CD4-positive, alpha-beta T cell (primary cell): ENCODE measurements at regions of chr1 and their contacts with region 1.

Region 1: GRCh38 chr1:85307987-85308832 is 31.8 kb upstream of the BCL10 start:
- DNase-seq: peak; percentile 21 to 70 (median 50)
- ATAC-seq: peak; percentile 83
- H3K4me3 ChIP-seq: no peak overlapping the region
- H3K4me3 Mint-ChIP-seq: peak overlapping the region; percentile 65
- H3K27ac ChIP-seq: no peak overlapping the region
- H3K27ac Mint-ChIP-seq: no peak overlapping the region
- H3K4me1 ChIP-seq: peaks cover 10% of the 10 kb centered on the region
- H3K4me1 Mint-ChIP-seq: peaks cover 5% of the 10 kb centered on the region
- H3K27me3 ChIP-seq: peaks cover 6 to 9% of the 10 kb centered on the region in 2 experiments
- H3K27me3 Mint-ChIP-seq: peaks cover 49% of the 10 kb centered on the region
- CTCF ChIP-seq: peak; percentile 71

Region 2: GRCh38 chr1:86018283-86018923 is 710.2 kb after region 1 on chr1:
- CTCF ChIA-PET with region 1: no interaction called
- POLR2A ChIA-PET with region 1: no interaction called
- intact Hi-C with region 1: loop called in 1 of 2 experiments (anchors 5 kb)
- DNase-seq: peak in 3 of 14 experiments; percentile 15 to 28 (median 17)
- ATAC-seq: no peak
- H3K4me3 ChIP-seq: no peak overlapping the region
- H3K4me3 Mint-ChIP-seq: no peak overlapping the region
- H3K27ac ChIP-seq: no peak overlapping the region
- H3K27ac Mint-ChIP-seq: no peak overlapping the region
- H3K4me1 ChIP-seq: no peaks in the 10 kb centered on the region
- H3K4me1 Mint-ChIP-seq: no peaks in the 10 kb centered on the region
- H3K27me3 ChIP-seq: no peaks in the 10 kb centered on the region
- H3K27me3 Mint-ChIP-seq: no peaks in the 10 kb centered on the region
- CTCF ChIP-seq: peak; percentile 66